Naive thymus-derived CD4-positive, alpha-beta T cell (primary cell): ENCODE measurements at regions of chr6 and their contacts with region 1.

Region 1: DNA sequence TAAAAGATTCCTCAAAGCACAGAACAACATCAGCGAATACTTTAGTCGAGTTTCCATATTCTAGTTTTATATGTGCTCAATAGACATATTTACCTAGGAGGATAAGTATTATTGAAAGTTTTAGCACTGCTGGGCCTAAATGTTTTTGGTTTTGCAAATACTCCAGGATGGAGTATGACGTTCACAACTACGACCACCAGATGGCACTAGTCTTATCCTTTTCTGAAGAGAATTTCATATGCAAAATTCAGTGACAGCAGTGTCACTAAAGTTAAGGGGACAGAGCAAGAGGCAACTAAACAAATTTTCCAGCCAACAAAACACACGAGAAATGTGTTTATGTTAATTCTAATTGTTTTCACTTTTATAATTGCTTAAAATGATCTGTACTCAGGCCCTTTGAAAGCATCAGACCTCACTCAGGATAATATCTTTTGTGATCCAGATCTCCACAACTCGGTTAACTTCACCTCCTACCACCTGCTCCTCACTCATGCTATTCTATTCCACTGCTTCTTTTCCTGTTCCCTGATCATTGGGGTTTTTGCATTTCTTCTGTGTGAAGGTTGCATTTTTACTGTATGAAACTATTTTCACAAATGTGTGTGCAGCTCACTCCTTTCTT is 220.8 kb downstream of the TRDN start:
- DNase-seq: peak in 6 of 9 donors; percentile 1 to 12 (median 2)
- ATAC-seq: peak; percentile 40
- H3K4me3 ChIP-seq: no peak overlapping the region
- H3K4me3 Mint-ChIP-seq: no peak overlapping the region
- H3K27ac ChIP-seq: no peak overlapping the region
- H3K27ac Mint-ChIP-seq: no peak overlapping the region
- H3K4me1 ChIP-seq: no peaks in the 10 kb centered on the region
- H3K4me1 Mint-ChIP-seq: no peaks in the 10 kb centered on the region
- H3K27me3 ChIP-seq: no peaks in the 10 kb centered on the region
- H3K27me3 Mint-ChIP-seq: no peaks in the 10 kb centered on the region

Region 2: GRCh38 chr6:123715006-123715875 is 299.3 kb after region 1 on chr6:
- CTCF ChIA-PET with region 1: no interaction called
- POLR2A ChIA-PET with region 1: no interaction called
- intact Hi-C with region 1: loop called in 1 of 2 experiments (anchors 1 kb)
- DNase-seq: no peak
- ATAC-seq: no peak
- H3K4me3 ChIP-seq: no peak overlapping the region
- H3K4me3 Mint-ChIP-seq: no peak overlapping the region
- H3K27ac ChIP-seq: no peak overlapping the region
- H3K27ac Mint-ChIP-seq: no peak overlapping the region
- H3K4me1 ChIP-seq: no peaks in the 10 kb centered on the region
- H3K4me1 Mint-ChIP-seq: no peaks in the 10 kb centered on the region
- H3K27me3 ChIP-seq: no peaks in the 10 kb centered on the region
- H3K27me3 Mint-ChIP-seq: no peaks in the 10 kb centered on the region

Region 3: GRCh38 chr6:124854338-124854922 is 1438.5 kb after region 1 on chr6:
- CTCF ChIA-PET with region 1: no interaction called
- POLR2A ChIA-PET with region 1: no interaction called
- intact Hi-C with region 1: loop called in 1 of 2 experiments (anchors 5 kb)
- DNase-seq: no peak
- ATAC-seq: no peak
- H3K4me3 ChIP-seq: no peak overlapping the region
- H3K4me3 Mint-ChIP-seq: no peak overlapping the region
- H3K27ac ChIP-seq: no peak overlapping the region
- H3K27ac Mint-ChIP-seq: no peak overlapping the region
- H3K4me1 ChIP-seq: no peaks in the 10 kb centered on the region
- H3K4me1 Mint-ChIP-seq: no peaks in the 10 kb centered on the region
- H3K27me3 ChIP-seq: no peaks in the 10 kb centered on the region
- H3K27me3 Mint-ChIP-seq: peaks cover 0 to 14% (median 2%) of the 10 kb centered on the region in 5 donors